WTC11 (cell line): ENCODE measurements at regions of chr1 and their contacts with region 1.

Region 1: DNA sequence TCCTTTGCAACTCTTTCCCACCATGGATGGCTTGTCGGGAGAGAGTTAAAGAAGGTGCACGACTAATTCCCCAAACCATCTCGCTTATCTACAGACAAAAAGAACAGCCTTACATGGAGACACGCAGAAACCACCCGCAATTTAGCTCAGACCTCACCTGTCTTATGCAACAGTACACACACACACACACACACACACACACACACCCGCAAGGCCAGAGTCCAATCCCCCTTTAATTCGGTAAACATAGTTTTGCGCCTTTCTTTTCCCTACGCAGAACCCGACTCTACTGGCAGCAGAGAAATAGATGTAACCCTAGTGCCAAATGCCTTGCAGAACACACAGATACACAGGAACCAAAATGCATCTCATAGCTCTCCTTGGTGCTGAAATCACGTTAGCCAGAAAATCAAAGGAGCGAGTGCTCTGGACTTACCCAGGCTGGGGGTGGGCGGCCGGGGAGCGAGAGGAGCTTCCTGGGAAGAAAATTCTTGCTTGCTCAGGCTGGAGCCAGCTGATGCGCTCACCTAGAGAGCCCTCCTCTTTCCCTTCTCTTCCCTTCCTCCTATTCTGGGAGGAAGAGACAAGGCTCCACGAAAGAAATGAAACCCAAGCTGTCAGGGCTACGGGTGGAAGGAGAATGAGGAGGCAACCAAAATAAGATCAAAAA is 470 bp downstream of the TNR start:
- DNase-seq: peak; percentile 59
- ATAC-seq: peak; percentile 89
- H3K4me3 Mint-ChIP-seq: peak overlapping the region; percentile 59
- H3K27ac Mint-ChIP-seq: no peak overlapping the region
- H3K4me1 Mint-ChIP-seq: peaks cover 14% of the 10 kb centered on the region
- H3K27me3 Mint-ChIP-seq: peaks cover 33% of the 10 kb centered on the region
- CTCF ChIP-seq: no peak

Region 2: GRCh38 chr1:175622362-175622761 is 120.6 kb before region 1 on chr1:
- CTCF ChIA-PET with region 1: no interaction called
- POLR2A ChIA-PET with region 1: no interaction called
- DNase-seq: no peak
- ATAC-seq: no peak
- H3K4me3 Mint-ChIP-seq: no peak overlapping the region
- H3K27ac Mint-ChIP-seq: no peak overlapping the region
- H3K4me1 Mint-ChIP-seq: no peaks in the 10 kb centered on the region
- H3K27me3 Mint-ChIP-seq: no peaks in the 10 kb centered on the region
- CTCF ChIP-seq: no peak

Region 3: GRCh38 chr1:175725684-175726083 is 17.2 kb before region 1 on chr1:
- CTCF ChIA-PET with region 1: interaction called, 12 read pairs
- POLR2A ChIA-PET with region 1: no interaction called
- DNase-seq: peak; percentile 64
- ATAC-seq: peak; percentile 52; the same call in 1 of the 2 replicates
- H3K4me3 Mint-ChIP-seq: no peak overlapping the region
- H3K27ac Mint-ChIP-seq: no peak overlapping the region
- H3K4me1 Mint-ChIP-seq: no peaks in the 10 kb centered on the region
- H3K27me3 Mint-ChIP-seq: peaks cover 18% of the 10 kb centered on the region
- CTCF ChIP-seq: no peak

Region 4: DNA sequence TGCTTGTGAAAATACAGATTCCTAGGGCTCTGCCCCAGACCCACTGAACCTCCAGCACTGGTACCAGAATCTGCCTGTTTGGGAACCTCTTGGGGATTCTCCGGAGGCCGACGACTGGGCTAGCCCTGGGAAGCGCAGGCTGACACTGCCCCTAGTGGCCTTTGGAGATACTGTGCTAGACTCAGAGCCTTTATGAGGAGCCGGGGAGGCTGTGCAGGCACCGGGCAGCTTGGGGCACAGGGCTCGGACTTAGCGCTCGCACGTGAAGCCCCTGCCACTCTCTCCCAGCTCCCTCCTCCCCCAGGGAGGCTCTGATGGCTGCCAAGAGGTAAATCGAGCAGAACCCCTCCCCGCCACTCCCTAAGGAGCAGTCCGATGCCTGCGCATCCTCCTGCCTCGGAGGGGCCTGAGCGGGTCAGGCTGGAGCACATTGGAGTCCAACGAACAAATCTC is 145.1 kb after region 1 on chr1:
- CTCF ChIA-PET with region 1: interaction called, 11 read pairs
- POLR2A ChIA-PET with region 1: no interaction called
- DNase-seq: peak; percentile 87
- ATAC-seq: peak; percentile 98
- H3K4me3 Mint-ChIP-seq: peak overlapping the region; percentile 58
- H3K27ac Mint-ChIP-seq: no peak overlapping the region
- H3K4me1 Mint-ChIP-seq: peaks cover 15% of the 10 kb centered on the region
- H3K27me3 Mint-ChIP-seq: peaks cover 96% of the 10 kb centered on the region
- CTCF ChIP-seq: peak; percentile 83